ENCODE measurements at regions of chr5 and their contacts with region 1.

Region 1: GRCh38 chr5:78984439-78985115 is 533 bp downstream of the ARSB start:
- DNase-seq: peak; percentile 83
- ATAC-seq: peak; percentile 55
- H3K4me3 Mint-ChIP-seq: peak overlapping the region; percentile 90
- H3K27ac Mint-ChIP-seq: peak overlapping the region; percentile 91
- H3K4me1 Mint-ChIP-seq: peaks cover 46% of the 10 kb centered on the region
- H3K27me3 Mint-ChIP-seq: no peaks in the 10 kb centered on the region
- CTCF ChIP-seq: no peak

Region 2: GRCh38 chr5:77491783-77492652 is 1492.6 kb before region 1 on chr5 and contains the start of gene WDR41:
- CTCF ChIA-PET with region 1: no interaction called
- POLR2A ChIA-PET with region 1: interaction called, 6 read pairs
- intact Hi-C with region 1: loop called (anchors 5 kb)
- DNase-seq: peak; percentile 87
- ATAC-seq: peak; percentile 82
- H3K4me3 Mint-ChIP-seq: peak within 1 kb of the TSS; percentile 91
- H3K27ac Mint-ChIP-seq: peak within 1 kb of the TSS; percentile 93
- H3K4me1 Mint-ChIP-seq: peaks cover 22% of the 10 kb centered on the region
- H3K27me3 Mint-ChIP-seq: peaks cover 7% of the 10 kb centered on the region
- CTCF ChIP-seq: no peak
- total RNA-seq, gene WDR41: 29.2 and 33.0 TPM in 2 replicates

Region 3: DNA sequence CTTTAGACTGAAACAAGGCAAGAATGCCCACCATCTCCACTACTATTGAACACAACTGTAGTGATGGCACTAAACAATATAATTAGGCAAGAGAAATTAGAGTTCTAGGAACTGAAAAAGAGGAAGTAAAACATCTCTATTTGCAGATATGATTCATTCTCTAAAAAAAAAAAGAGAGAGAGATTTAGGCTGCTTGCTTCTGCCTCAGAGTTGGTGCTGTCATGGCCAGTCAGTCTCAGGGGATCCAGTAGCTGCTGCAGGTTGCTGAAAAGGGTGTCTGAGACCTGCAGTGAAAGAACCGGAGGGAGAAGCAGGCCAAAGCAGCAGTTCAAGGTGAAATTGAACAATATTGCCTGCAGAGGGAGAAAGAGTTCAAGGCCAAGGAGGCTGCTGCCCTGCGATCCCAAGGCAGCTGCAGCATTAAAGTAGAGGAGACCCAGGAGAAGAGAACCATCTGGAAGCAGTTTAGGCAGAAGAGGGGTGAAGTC is 762.6 kb before region 1 on chr5:
- CTCF ChIA-PET with region 1: no interaction called
- POLR2A ChIA-PET with region 1: no interaction called
- intact Hi-C with region 1: loop called (anchors 5 kb)
- DNase-seq: peak; percentile 47
- ATAC-seq: peak; percentile 100
- H3K4me3 Mint-ChIP-seq: peak overlapping the region; percentile 1
- H3K27ac Mint-ChIP-seq: peak overlapping the region; percentile 54
- H3K4me1 Mint-ChIP-seq: peaks cover 18% of the 10 kb centered on the region
- H3K27me3 Mint-ChIP-seq: no peaks in the 10 kb centered on the region
- CTCF ChIP-seq: no peak

Region 4: GRCh38 chr5:78648359-78649210 is 336.0 kb before region 1 on chr5 and contains the start of gene LHFPL2:
- CTCF ChIA-PET with region 1: no interaction called
- POLR2A ChIA-PET with region 1: interaction called, 13 read pairs
- intact Hi-C with region 1: loop called (anchors 5 kb)
- DNase-seq: peak; percentile 63
- ATAC-seq: peak; percentile 69
- H3K4me3 Mint-ChIP-seq: peak within 1 kb of the TSS; percentile 83
- H3K27ac Mint-ChIP-seq: peak within 1 kb of the TSS; percentile 73
- H3K4me1 Mint-ChIP-seq: peaks cover 25% of the 10 kb centered on the region
- H3K27me3 Mint-ChIP-seq: no peaks in the 10 kb centered on the region
- CTCF ChIP-seq: no peak
- total RNA-seq, gene LHFPL2: 11.0 and 12.0 TPM in 2 replicates

Region 5: DNA sequence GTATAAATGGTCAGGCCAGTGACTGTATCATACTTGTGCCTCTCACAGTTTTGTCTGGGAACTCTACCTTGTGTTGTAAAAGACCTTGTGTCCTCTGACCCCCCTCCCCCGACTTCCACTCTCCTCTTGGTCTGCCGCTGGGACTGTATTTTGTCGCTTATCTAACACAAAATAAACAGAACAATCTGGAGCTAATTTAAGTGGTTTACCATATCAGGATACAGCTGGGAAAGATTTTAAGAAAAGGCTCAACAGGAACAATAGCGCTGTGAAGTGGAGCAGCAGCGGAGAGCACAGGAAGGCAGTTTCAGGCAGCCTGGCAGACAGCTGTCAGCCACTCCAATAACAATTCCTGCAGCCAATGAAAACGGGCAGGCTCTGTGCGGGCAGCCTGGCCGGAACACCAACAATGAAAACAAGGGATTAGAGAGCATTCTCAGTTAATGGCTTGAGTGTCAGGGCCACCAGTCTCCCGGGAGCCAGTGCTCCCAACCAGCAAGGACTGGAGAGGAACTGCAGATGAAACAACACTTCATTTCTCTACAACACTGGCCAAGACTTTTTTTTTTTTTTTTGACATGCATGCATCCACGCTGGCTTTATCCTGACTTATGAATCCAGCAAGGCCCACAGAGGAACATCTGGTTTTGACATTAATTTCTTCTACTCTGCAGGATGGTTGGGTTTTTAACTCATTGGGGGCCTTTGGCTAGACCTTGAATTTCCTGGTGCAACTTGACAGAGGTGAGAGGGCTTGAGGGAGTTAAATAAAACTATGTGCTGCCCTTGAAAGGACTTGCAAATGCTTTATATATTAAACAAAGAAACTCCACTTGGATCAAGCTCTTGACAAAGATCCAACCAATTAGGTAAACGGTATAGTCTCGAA is 76.2 kb before region 1 on chr5:
- CTCF ChIA-PET with region 1: no interaction called
- POLR2A ChIA-PET with region 1: interaction called, 9 read pairs
- intact Hi-C with region 1: loop called (anchors 2 kb)
- DNase-seq: no peak
- ATAC-seq: no peak
- H3K4me3 Mint-ChIP-seq: peak overlapping the region; percentile 70
- H3K27ac Mint-ChIP-seq: peak overlapping the region; percentile 59
- H3K4me1 Mint-ChIP-seq: peaks cover 67% of the 10 kb centered on the region
- H3K27me3 Mint-ChIP-seq: no peaks in the 10 kb centered on the region
- CTCF ChIP-seq: no peak

Region 6: GRCh38 chr5:79235634-79236363 is 251.2 kb after region 1 on chr5 and contains the start of gene JMY:
- CTCF ChIA-PET with region 1: no interaction called
- POLR2A ChIA-PET with region 1: no interaction called
- intact Hi-C with region 1: loop called (anchors 1 kb)
- DNase-seq: peak; percentile 68
- ATAC-seq: peak; percentile 79
- H3K4me3 Mint-ChIP-seq: peak within 1 kb of the TSS; percentile 91
- H3K27ac Mint-ChIP-seq: peak within 1 kb of the TSS; percentile 94
- H3K4me1 Mint-ChIP-seq: peaks cover 34% of the 10 kb centered on the region
- H3K27me3 Mint-ChIP-seq: no peaks in the 10 kb centered on the region
- CTCF ChIP-seq: no peak
- total RNA-seq, gene JMY: 6.4 and 6.9 TPM in 2 replicates

Region 7: GRCh38 chr5:79712741-79713140 is 728.2 kb after region 1 on chr5:
- CTCF ChIA-PET with region 1: no interaction called
- POLR2A ChIA-PET with region 1: no interaction called
- intact Hi-C with region 1: no loop called
- DNase-seq: no peak
- ATAC-seq: no peak
- H3K4me3 Mint-ChIP-seq: no peak overlapping the region
- H3K27ac Mint-ChIP-seq: no peak overlapping the region
- H3K4me1 Mint-ChIP-seq: peaks cover 2% of the 10 kb centered on the region
- H3K27me3 Mint-ChIP-seq: no peaks in the 10 kb centered on the region
- CTCF ChIP-seq: no peak

Region 8: GRCh38 chr5:80255732-80256479 is 1271.3 kb after region 1 on chr5 and contains the start of gene SERINC5:
- CTCF ChIA-PET with region 1: no interaction called
- POLR2A ChIA-PET with region 1: no interaction called
- intact Hi-C with region 1: loop called (anchors 10 kb)
- DNase-seq: peak; percentile 75
- ATAC-seq: peak; percentile 84
- H3K4me3 Mint-ChIP-seq: peak within 1 kb of the TSS; percentile 96
- H3K27ac Mint-ChIP-seq: peak within 1 kb of the TSS; percentile 95
- H3K4me1 Mint-ChIP-seq: peaks cover 29% of the 10 kb centered on the region
- H3K27me3 Mint-ChIP-seq: no peaks in the 10 kb centered on the region
- CTCF ChIP-seq: no peak
- total RNA-seq, gene SERINC5: 4.4 and 5.3 TPM in 2 replicates

Region 9: GRCh38 chr5:80346055-80346454 is 1361.5 kb after region 1 on chr5:
- CTCF ChIA-PET with region 1: no interaction called
- POLR2A ChIA-PET with region 1: no interaction called
- intact Hi-C with region 1: no loop called
- DNase-seq: no peak
- ATAC-seq: peak; percentile 57
- H3K4me3 Mint-ChIP-seq: no peak overlapping the region
- H3K27ac Mint-ChIP-seq: no peak overlapping the region
- H3K4me1 Mint-ChIP-seq: no peaks in the 10 kb centered on the region
- H3K27me3 Mint-ChIP-seq: no peaks in the 10 kb centered on the region
- CTCF ChIP-seq: no peak